Ascending aorta (tissue), 2 donors: ENCODE measurements at regions of chr19 and their contacts with region 1.

Region 1: GRCh38 chr19:4065430-4066175 is 1.1 kb downstream of the ZBTB7A start:
- DNase-seq: peak; percentile 77 to 98
- H3K4me3 ChIP-seq: peak overlapping the region; percentile 92 to 98
- H3K27ac ChIP-seq: peak overlapping the region; percentile 78 to 90
- H3K4me1 ChIP-seq: peaks cover 31 to 34% of the 10 kb centered on the region in 2 donors
- H3K27me3 ChIP-seq: no peaks in the 10 kb centered on the region
- CTCF ChIP-seq: no peak

Region 2: DNA sequence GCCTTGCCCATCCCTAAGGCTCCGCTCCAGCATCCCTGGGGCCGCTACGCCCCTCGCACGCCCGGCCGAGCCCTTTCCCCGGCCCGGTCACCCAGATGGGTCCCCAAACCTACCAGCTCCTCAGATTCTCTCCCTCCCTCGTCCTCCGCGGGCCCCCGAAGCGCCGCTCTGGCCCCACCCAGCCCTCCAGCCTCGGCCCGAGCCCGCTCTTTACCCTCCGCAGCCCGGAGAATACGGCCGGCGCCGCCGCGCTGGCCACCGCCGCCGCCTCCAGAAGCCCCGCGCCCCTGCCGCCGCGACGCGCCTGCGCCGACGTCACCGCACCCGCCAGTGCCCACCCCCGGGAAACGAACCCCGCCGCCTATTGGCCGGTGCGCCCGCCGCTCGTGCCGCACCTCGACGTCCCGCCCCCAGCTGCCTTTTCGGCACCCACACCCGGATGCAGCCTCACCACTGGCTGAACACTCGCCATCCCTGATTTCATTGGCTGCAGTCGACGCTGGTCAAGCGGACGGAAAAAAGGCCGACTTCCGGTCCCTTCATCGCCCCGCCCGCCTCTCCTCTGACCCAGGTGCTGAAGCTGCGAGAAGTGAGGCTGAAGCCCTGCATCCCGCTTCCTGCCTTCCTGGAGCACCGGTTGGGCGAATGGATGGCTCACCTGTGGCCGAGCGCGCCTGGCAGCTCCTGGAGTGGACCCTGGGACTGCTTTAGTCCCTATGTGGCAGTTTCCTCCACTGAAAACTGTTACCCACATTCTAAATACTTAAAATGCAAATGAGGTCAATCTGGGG is 94.6 kb before region 1 on chr19 and contains the start of gene DAPK3:
- intact Hi-C with region 1: loop called (anchors 5 kb)
- DNase-seq: peak; percentile 89 to 98
- H3K4me3 ChIP-seq: peak within 1 kb of the TSS; percentile 78 to 98
- H3K27ac ChIP-seq: peak within 1 kb of the TSS; percentile 99 to 100
- H3K4me1 ChIP-seq: peaks cover 28 to 33% of the 10 kb centered on the region in 2 donors
- H3K27me3 ChIP-seq: no peaks in the 10 kb centered on the region
- CTCF ChIP-seq: no peak
- total RNA-seq, gene DAPK3: 135 TPM

Region 3: DNA sequence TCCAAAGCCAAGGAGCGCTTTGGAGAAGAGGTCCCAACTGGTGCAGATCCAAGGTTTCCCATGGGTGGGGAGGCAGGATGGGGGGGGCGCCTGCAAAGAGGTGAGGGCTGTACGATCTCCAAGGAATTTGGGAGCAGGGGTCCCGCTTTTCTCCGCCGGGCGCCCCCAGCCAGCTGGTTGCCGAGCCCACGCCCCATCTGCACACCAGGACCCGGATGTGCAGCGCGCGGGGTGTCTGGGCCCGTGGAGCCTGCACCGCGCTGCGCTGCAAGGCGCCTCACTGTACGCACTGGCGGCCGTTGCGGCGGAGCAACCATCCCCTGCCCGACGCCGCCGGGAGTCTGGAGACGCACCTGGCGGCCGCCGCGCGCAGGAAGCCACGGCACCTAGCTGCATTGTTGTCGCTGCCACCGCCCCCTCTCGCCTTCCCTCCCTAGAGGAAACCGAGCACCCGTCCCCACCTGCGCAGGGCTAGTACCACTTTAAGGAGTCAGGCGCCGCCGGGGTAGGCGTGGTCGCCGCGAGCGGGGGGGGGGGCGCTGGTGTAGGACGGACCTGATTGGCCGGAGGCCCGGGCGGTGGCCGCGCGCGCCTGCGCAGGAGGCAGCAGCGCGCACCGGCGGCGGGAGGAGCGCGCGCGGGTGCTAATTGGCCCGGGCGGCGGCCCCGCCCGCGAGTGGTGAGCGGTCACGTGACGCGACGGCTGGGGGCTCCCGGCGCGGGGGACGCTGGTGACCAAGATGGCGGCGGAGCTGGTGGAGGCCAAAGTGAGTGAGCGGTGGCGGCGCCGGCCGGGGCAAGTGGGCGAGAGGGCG is 58.4 kb before region 1 on chr19 and contains the start of gene PIAS4:
- intact Hi-C with region 1: loop called (anchors 1 kb)
- DNase-seq: peak; percentile 86 to 97
- H3K4me3 ChIP-seq: peak within 1 kb of the TSS; percentile 95 to 96
- H3K27ac ChIP-seq: peak within 1 kb of the TSS; percentile 66 to 67
- H3K4me1 ChIP-seq: peaks cover 5 to 29% of the 10 kb centered on the region in 2 donors
- H3K27me3 ChIP-seq: no peaks in the 10 kb centered on the region
- CTCF ChIP-seq: peak in 1 of 3 experiments; percentile 19
- total RNA-seq, gene PIAS4: 30.8 TPM

Region 4: GRCh38 chr19:4083677-4084546 is 18.3 kb after region 1 on chr19:
- intact Hi-C with region 1: no loop called
- DNase-seq: no peak
- H3K4me3 ChIP-seq: peak overlapping the region in 1 of 2 donors; percentile 24
- H3K27ac ChIP-seq: no peak overlapping the region
- H3K4me1 ChIP-seq: no peaks in the 10 kb centered on the region
- H3K27me3 ChIP-seq: no peaks in the 10 kb centered on the region
- CTCF ChIP-seq: no peak

Region 5: DNA sequence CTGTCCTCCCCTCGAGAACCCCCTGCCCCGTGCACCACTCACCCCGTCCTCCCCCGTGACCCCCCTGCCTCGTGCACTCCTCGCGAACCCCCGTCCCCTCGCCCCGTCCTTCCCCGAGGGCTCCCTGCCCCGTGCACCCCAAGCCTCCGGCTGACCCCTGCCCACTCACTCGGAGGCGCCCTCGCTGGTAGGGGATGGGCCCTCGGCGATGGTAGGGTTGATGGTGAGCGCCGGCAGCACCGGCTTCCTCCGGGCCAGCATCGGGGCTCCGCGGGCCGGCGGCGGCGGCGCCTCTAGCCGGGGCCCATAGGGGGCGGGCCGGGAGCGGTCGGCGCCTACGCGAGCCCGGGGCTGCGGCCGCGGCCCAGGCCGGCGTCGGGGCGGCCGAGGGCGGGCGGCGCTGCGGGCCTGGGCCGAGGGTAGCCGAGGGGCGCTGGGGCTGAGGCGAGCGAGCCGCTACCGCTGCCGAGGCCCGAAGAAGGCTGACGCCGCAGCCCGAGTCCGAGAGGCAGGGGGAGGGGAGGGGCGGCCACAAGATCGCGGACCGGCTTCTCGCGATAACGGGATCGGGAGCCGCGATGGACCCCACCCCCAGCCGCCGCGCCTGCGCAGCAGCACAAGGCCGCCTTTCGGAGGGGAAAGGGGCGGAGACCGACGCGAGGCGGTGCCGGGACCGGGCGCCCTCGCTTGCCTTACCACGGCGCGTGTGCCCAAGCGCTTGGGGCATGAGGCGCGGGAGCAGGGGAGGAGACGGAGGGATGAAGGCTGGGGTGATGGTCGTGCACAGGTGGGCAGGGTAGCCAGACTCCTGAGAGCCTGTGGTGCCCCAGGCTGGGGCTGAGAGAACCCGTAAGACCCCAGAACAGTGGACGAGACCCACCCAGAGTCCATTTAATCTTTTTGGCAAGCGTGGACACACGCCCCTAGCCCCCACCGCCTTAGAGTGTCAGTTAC is 58.3 kb after region 1 on chr19 and contains the start of gene MAP2K2:
- intact Hi-C with region 1: loop called (anchors 2 kb)
- DNase-seq: peak; percentile 59 to 95
- H3K4me3 ChIP-seq: peak within 1 kb of the TSS; percentile 85 to 99
- H3K27ac ChIP-seq: peak within 1 kb of the TSS; percentile 52 to 63
- H3K4me1 ChIP-seq: peaks cover 12 to 16% of the 10 kb centered on the region in 2 donors
- H3K27me3 ChIP-seq: no peaks in the 10 kb centered on the region
- CTCF ChIP-seq: peak in 1 of 3 experiments; percentile 19
- total RNA-seq, gene MAP2K2: 155 TPM

Region 6: DNA sequence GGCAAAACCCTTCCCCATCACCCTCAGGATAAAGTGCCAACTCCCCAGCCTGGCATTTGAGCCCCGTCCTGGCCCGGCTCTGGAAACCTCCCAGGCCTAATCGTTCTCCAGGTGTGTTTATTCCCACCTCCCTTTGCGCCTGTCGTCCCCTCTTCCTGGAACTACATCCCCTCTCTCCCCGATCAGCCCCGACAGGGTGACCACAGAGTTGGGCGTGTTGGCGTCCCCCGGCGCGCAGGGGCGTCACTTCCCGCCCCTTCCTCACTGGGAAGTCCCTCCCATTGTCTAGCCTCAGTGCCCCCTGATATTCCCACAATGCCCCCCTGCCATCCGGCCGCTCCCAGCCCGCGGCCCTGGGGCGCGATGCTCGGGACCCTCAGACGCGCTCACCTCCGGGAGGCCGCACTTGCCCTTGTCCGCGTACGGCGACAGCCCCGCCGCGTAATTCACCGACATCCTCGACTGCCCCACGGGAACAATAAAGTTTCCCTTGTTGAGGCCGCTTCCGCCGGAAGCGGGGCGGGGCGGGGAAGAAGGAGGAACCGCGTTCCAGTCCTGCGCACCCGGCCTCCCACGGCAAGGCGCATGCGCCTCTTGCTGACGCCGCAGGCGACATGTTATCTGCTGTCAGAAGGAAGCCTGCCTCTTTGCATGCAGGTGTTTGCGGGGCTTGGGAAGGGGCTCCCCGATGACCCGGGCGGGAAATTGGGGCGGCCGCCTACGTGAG is 116.6 kb after region 1 on chr19 and contains the starts of genes ANKRD24 and SIRT6:
- intact Hi-C with region 1: loop called (anchors 5 kb)
- DNase-seq: peak; percentile 78 to 97
- H3K4me3 ChIP-seq: peak within 1 kb of the TSS; percentile 75 to 96
- H3K27ac ChIP-seq: peak within 1 kb of the TSS; percentile 65 to 74
- H3K4me1 ChIP-seq: peaks cover 12 to 14% of the 10 kb centered on the region in 2 donors
- H3K27me3 ChIP-seq: no peaks in the 10 kb centered on the region
- CTCF ChIP-seq: no peak
- total RNA-seq, gene ANKRD24: not detected
- total RNA-seq, gene SIRT6: 5.9 TPM

Region 7: GRCh38 chr19:4217429-4218264 is 152.0 kb after region 1 on chr19:
- intact Hi-C with region 1: no loop called
- DNase-seq: no peak
- H3K4me3 ChIP-seq: no peak overlapping the region
- H3K27ac ChIP-seq: no peak overlapping the region
- H3K4me1 ChIP-seq: no peaks in the 10 kb centered on the region
- H3K27me3 ChIP-seq: no peaks in the 10 kb centered on the region
- CTCF ChIP-seq: no peak